Activated CD4-positive, alpha-beta T cell treated with anti-CD3 and anti-CD28 coated beads, Interleukin-2, amount 10 ng/mL, durations not matched to agents 24 days and 14 days (primary cell): ENCODE measurements at regions of chr13 and their contacts with region 1.

Region 1: DNA sequence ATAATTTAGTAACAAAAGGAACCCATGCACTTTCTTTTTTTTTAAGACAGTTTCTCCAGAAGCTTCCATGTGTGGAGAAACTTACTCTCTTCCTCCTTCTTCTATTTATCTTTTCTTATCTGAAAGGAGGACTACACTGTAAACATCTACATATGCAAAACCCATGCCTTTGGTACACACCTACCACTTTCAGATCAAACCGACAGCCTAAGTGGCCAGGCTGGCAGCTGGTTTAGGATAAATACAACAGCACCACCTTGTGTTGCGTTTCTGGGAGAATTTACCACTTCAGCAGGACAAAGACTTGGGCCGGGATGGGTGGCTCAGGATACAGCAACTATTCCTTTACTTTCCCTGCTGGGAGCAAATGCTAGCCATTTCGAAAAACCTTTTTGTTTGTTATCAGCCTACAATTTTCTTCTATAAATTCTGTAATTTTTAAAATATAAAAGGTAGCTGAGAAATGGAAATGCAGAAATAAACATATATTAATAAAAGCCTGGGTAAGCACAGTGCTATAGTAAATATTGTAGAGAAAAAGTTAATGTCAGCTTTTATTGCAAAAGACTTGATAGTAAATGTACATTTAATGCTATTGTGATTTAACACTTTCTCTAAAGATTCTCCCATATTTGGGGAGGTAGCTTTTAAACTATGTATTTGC is 94.0 kb upstream of the RFC3 start:
- DNase-seq: peak; percentile 90
- H3K4me3 Mint-ChIP-seq: no peak overlapping the region
- H3K27ac Mint-ChIP-seq: peak overlapping the region; percentile 76
- H3K4me1 Mint-ChIP-seq: peaks cover 26% of the 10 kb centered on the region
- H3K27me3 Mint-ChIP-seq: no peaks in the 10 kb centered on the region

Region 2: DNA sequence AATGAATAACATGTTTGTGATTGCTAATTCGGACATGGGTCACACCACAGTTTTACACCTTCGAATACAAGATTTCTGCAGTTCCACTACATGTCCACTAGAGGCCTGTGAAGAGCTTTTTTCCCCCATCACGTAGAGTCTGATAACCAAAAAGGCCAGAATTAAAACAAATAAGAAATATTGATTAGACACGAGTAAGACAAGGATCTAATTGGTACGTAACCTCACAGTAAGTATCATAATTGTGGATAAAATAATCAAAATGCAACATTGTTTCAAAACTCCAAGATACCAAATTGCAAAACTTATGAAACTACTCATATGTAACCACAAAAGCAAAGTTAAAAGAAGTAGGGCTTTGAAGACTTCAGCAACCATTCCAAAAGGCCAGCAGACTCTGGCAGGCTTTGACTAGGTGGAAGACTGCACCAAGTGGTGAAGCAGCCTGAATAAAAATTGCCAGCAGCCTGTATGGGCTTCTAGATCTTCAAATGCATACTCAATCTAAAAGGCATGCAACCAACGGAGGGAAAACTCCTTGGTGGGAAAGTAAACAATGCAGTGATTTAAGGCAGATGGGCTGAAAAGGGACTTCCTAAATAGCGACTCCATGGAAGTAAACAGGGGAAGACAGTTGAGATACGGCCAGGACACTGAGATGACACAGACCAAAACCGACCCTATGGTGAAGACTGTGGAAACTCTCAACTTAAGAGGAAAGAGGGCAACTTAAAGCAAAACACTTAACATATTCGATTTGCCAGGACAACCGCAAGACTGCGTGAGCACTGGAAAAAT is 495.1 kb before region 1 on chr13:
- intact Hi-C with region 1: loop called (anchors 1 kb)
- DNase-seq: peak; percentile 67
- H3K4me3 Mint-ChIP-seq: no peak overlapping the region
- H3K27ac Mint-ChIP-seq: peak overlapping the region; percentile 10
- H3K4me1 Mint-ChIP-seq: peaks cover 8% of the 10 kb centered on the region
- H3K27me3 Mint-ChIP-seq: peaks cover 3% of the 10 kb centered on the region

Region 3: GRCh38 chr13:33639626-33640080 is 84.3 kb before region 1 on chr13:
- intact Hi-C with region 1: loop called (anchors 2 kb)
- DNase-seq: peak; percentile 65
- H3K4me3 Mint-ChIP-seq: no peak overlapping the region
- H3K27ac Mint-ChIP-seq: peak overlapping the region; percentile 61
- H3K4me1 Mint-ChIP-seq: peaks cover 39% of the 10 kb centered on the region
- H3K27me3 Mint-ChIP-seq: no peaks in the 10 kb centered on the region